ENCODE measurements at regions of chr13 and their contacts with region 1.

Region 1: DNA sequence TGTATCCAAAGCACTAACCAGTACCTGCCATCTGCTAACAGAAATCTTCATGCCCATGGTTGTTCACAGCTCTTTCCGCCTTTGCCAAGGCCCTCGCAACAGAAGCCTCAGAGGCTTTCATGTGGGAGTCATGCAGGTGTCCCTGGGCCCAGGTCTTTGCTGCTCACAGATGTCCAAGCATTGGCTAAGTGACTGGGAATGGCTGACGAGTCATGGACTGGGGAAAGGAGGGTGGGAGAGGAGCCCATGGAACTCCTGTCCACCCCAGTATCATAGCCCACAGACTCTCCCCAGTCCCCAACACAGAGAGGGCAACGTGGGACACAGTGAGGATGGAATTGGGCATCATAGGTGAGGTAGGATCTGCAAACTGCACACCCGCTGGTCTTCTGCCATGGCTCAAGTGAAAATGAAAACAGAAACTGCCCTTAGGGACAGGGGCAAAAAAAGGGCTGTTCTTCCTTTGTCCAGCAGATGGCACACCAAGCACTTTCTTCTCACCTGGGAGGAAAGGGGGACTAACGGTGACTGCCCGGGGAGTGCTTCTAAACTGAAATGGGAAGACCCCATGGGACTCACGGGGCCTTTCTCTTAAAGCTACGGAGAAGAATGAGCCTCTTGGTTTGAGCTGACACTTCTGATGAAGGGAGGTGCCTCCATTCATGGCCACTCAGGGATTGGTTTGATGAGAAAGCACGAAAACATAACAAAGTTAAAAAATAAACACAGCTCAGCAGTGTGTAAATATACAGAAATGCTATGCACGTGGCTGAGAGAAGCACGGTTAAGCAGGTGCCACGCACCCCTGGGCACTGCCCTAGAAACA is 11.1 kb upstream of the DHRS12 start:
- DNase-seq: peak; percentile 75
- H3K4me3 ChIP-seq: no peak overlapping the region
- H3K27ac ChIP-seq: no peak overlapping the region
- H3K4me1 ChIP-seq: peaks cover under 1% of the 10 kb centered on the region
- H3K27me3 ChIP-seq: no peaks in the 10 kb centered on the region
- CTCF ChIP-seq: peak; percentile 84

Region 2: GRCh38 chr13:51803422-51804294 is 11.4 kb before region 1 on chr13 and contains the start of gene DHRS12:
- CTCF ChIA-PET with region 1: no interaction called
- POLR2A ChIA-PET with region 1: no interaction called
- intact Hi-C with region 1: loop called (anchors 1 kb)
- DNase-seq: peak; percentile 93
- H3K4me3 ChIP-seq: peak within 1 kb of the TSS; percentile 69
- H3K27ac ChIP-seq: peak within 1 kb of the TSS; percentile 96
- H3K4me1 ChIP-seq: peaks cover 21% of the 10 kb centered on the region
- H3K27me3 ChIP-seq: no peaks in the 10 kb centered on the region
- CTCF ChIP-seq: no peak
- total RNA-seq, gene DHRS12: 2.8 and 3.1 TPM in 2 replicates

Region 3: DNA sequence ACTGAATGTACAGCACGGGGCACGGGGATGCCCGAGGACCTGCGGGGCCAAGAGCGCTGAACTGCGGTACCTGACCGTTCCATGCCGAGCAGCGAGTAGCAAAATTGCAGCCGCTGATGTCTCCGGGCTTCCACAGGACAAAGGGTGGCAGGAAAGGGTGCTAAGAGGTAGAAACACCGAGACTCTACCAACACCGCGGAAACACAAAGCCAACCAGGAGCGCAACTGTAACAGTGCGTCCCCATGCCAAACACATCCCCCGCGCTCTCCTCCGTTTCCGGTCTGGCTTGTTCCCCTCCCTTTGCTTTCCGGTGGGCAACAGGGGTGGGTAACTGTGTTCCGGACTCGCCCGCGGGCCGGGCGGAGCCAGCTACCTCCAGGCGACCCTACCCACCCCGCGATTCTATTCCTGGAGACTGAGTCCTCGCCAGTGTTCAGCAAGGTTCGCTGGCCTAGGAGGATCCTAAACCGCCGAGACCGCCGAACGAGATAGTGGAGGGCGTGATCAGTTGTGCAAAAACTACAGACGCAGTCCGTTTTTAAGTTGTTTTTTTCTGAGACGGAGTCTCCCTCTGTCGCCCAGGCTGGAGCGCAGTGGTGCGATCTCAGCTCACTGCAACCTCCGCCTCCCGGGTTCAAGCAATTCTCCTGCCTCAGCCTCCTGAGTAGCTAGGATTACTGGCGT is 379.3 kb after region 1 on chr13:
- CTCF ChIA-PET with region 1: no interaction called
- POLR2A ChIA-PET with region 1: no interaction called
- intact Hi-C with region 1: loop called (anchors 10 kb)
- DNase-seq: peak; percentile 90
- H3K4me3 ChIP-seq: peak overlapping the region; percentile 83
- H3K27ac ChIP-seq: peak overlapping the region; percentile 80
- H3K4me1 ChIP-seq: peaks cover 7% of the 10 kb centered on the region
- H3K27me3 ChIP-seq: no peaks in the 10 kb centered on the region
- CTCF ChIP-seq: peak; percentile 22; the same call in 1 of the 2 replicates